SK-N-SH (cell line): ENCODE measurements at regions of chr3 and their contacts with region 1.

Region 1: DNA sequence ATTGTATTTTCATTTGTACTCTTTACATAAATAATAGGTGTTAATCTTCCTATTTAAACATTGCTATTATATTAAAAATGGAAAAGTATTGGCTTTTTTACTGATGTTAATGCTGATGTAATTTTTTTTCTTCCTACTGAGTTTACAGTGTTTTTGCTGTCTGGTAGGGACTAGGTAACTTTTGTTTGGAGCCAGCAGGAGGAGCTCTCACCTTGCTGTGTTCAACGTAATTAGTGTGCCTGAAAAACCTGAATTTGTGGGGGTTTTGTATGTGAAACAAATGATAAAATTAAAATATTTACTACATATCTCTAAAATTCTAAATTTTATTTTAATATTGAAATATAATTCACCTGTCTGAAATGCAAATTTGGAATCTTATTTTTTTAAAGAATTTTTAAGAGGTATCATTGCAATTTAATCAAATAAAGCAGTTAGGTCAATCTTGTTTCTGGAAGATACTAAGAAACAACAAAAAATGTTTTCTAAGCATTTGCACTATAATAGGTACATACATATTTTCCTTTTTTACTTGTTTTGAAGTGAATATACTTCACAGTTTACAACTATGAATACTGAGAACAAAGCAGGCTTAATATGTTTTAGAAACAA is 48.8 kb downstream of the EPHA6 start:
- DNase-seq: peak; percentile 10
- H3K4me3 ChIP-seq: no peak overlapping the region; a peak in 1 of 4 replicates
- H3K27ac ChIP-seq: no peak overlapping the region
- H3K4me1 ChIP-seq: no peaks in the 10 kb centered on the region
- H3K27me3 ChIP-seq: no peaks in the 10 kb centered on the region
- CTCF ChIP-seq: peak; percentile 75
- EP300 ChIP-seq: no peak
- RAD21 ChIP-seq: peak; percentile 89

Region 2: GRCh38 chr3:96852856-96853255 is 10.4 kb before region 1 on chr3:
- CTCF ChIA-PET with region 1: interaction called, 14 read pairs
- POLR2A ChIA-PET with region 1: no interaction called
- DNase-seq: no peak
- H3K4me3 ChIP-seq: no peak overlapping the region
- H3K27ac ChIP-seq: no peak overlapping the region
- H3K4me1 ChIP-seq: no peaks in the 10 kb centered on the region
- H3K27me3 ChIP-seq: no peaks in the 10 kb centered on the region
- CTCF ChIP-seq: no peak
- EP300 ChIP-seq: no peak
- RAD21 ChIP-seq: no peak

Region 3: DNA sequence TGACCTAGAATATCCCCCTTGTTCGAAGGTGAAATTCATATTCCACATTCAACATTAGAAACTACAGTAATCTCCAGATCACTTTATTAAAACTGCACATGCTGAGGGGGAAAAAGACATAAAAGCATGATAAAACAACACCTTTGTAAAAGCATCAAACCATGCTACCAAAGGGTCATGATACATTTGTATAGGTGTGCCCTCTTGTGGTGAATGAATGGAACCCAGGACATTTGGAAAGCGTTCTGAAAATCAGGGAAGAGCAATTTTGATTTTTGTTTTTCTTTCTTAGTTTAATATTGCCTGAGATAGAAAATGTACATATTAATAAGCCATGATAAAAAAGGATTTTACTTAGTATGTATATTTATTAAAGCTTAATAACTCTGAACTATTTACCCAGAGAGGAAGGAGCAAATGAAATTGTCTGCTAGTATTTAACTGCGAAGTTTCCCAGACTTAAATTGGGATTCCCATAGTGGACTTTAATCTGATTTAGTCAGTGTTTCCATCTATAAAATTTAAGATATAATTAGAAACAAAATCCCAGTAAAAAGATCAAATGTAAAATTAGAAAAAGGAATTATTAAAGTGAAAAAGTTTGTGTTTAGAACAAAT is 795.5 kb after region 1 on chr3:
- CTCF ChIA-PET with region 1: interaction called, 27 read pairs
- POLR2A ChIA-PET with region 1: no interaction called
- DNase-seq: peak; percentile 20
- H3K4me3 ChIP-seq: no peak overlapping the region; a peak in 1 of 4 replicates
- H3K27ac ChIP-seq: no peak overlapping the region
- H3K4me1 ChIP-seq: no peaks in the 10 kb centered on the region; a peak in 1 of 4 replicates
- H3K27me3 ChIP-seq: no peaks in the 10 kb centered on the region
- CTCF ChIP-seq: peak; percentile 75
- EP300 ChIP-seq: no peak
- RAD21 ChIP-seq: peak; percentile 82